AG04449 (cell line): ENCODE measurements at regions of chr11 and their contacts with region 1.

Region 1: DNA sequence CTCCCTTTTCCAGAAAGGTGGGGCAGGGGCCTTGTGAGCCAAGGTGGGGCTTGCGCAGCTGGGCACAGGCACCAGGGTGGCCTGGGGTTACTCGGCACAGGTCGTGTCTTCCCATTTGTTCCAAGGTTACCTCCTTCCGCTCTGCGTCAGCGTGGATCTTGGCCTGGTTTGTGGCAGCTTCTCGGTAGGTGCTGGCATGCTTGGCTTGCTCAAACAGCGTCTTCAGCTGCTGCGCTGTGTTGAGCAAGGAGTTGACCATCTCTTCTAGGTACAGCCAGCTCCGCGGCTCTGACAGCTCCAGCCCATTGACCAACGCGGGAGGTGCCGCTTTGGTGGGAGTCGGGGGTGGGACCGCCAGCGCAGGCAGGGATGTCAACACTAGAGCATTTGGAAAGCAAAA is 20.6 kb downstream of the DEAF1 start:
- DNase-seq: no peak
- H3K4me3 ChIP-seq: no peak overlapping the region
- CTCF ChIP-seq: no peak

Region 2: GRCh38 chr11:460331-461199 is 213.8 kb before region 1 on chr11:
- CTCF ChIA-PET with region 1: no interaction called
- POLR2A ChIA-PET with region 1: no interaction called
- DNase-seq: no peak
- H3K4me3 ChIP-seq: no peak overlapping the region
- CTCF ChIP-seq: no peak

Region 3: DNA sequence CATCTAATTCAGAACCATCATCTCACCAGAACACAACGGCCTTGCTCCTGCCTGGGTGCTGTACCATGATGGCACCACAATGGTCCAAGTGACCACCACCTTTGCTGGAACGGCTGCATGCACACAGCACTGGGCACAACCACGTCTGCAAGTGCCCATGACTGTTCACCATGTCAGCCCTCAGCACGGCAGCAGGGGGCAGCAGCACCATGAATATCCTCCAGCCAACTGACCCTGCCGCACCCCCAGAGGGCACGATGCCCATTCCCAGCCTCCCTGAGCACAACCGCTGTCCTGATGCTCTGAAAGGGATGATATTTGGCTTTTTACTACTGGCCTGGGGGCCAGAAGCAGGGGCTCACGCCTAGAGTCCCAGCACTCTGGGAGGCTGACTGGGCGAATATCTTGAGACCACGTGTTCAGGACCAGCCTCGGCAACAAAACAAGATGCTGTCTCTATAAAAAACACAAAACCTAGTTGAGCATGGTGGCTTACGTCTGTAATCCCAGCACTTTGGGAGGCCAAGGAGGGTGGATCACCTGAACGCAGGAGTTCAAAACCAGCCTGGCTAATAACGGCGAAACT is 11.6 kb before region 1 on chr11:
- CTCF ChIA-PET with region 1: interaction called, 12 read pairs
- POLR2A ChIA-PET with region 1: no interaction called
- DNase-seq: no peak
- H3K4me3 ChIP-seq: no peak overlapping the region
- CTCF ChIP-seq: peak; percentile 86